ENCODE measurements at regions of chr5 and their contacts with region 1.

Region 1: GRCh38 chr5:95069948-95070347 is 214.9 kb downstream of the MCTP1 start:
- DNase-seq: no peak
- ATAC-seq: peak; percentile 42
- H3K4me3 ChIP-seq: no peak overlapping the region; the same call in 1 of the 2 replicates
- H3K27ac ChIP-seq: peak overlapping the region; percentile 30; the same call in 1 of the 2 replicates
- H3K4me1 ChIP-seq: peaks cover 44% of the 10 kb centered on the region
- H3K27me3 ChIP-seq: no peaks in the 10 kb centered on the region
- CTCF ChIP-seq: no peak
- EP300 ChIP-seq: no peak
- POLR2A ChIP-seq: no peak
- RAD21 ChIP-seq: no peak

Region 2: GRCh38 chr5:94021246-94021645 is 1048.7 kb before region 1 on chr5:
- CTCF ChIA-PET with region 1: no interaction called
- POLR2A ChIA-PET with region 1: no interaction called
- RAD21 ChIA-PET with region 1: no interaction called
- SMC1A ChIA-PET with region 1: no interaction called
- in situ Hi-C with region 1: no loop called
- intact Hi-C with region 1: no loop called
- DNase-seq: no peak
- ATAC-seq: no peak
- H3K4me3 ChIP-seq: no peak overlapping the region
- H3K27ac ChIP-seq: no peak overlapping the region
- H3K4me1 ChIP-seq: no peaks in the 10 kb centered on the region
- H3K27me3 ChIP-seq: no peaks in the 10 kb centered on the region
- CTCF ChIP-seq: no peak
- EP300 ChIP-seq: no peak
- POLR2A ChIP-seq: no peak
- RAD21 ChIP-seq: no peak

Region 3: DNA sequence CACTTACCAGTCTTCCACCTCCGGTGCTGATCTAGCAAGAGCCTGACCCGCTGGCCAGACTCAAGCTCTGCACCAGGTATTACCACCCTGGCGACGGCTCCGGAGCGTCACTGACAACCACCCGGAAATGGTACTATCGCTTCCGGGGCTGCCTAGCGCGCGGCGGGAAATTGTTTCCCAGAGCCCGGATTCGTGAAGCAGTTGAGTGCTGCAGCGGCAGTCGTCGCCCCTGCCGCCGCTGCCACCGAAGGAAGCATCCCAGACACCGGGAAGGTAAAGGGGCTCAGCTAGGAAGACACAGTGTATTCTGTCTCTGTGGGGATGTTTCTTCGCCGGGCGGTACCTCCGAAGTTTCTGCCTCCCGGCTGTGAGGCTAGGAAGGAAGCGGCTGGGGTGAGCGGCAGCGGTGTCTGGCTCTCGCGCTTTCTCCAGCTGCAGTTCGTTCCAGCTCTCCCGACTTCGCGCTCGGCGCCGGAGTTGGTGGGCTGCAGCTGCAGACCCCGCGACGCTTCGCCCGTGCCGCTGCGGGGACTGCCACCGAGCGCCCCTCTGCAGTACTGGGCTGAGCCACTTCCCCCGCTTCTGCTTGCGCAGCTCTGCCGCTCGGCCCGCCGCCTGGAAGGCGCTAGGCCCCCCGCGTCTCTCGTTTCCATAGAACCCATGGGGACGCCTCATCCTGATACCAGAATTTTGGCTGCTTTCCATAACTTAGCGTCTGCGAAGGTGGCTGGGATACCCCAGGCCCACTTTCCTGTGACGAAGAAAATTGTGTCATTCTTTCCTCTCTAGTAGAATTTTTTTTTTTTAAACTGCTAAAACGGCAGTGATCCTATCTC is 451.2 kb before region 1 on chr5 and contains the starts of genes KIAA0825 and SLF1:
- CTCF ChIA-PET with region 1: interaction called, 3 read pairs
- POLR2A ChIA-PET with region 1: no interaction called
- RAD21 ChIA-PET with region 1: no interaction called
- SMC1A ChIA-PET with region 1: no interaction called
- in situ Hi-C with region 1: loop called (anchors 10 kb)
- intact Hi-C with region 1: no loop called
- DNase-seq: peak; percentile 39
- ATAC-seq: peak; percentile 94
- H3K4me3 ChIP-seq: peak within 1 kb of the TSS; percentile 79
- H3K27ac ChIP-seq: peak within 1 kb of the TSS; percentile 45
- H3K4me1 ChIP-seq: peaks cover 3% of the 10 kb centered on the region
- H3K27me3 ChIP-seq: no peaks in the 10 kb centered on the region
- CTCF ChIP-seq: no peak
- EP300 ChIP-seq: no peak
- POLR2A ChIP-seq: peak; percentile 80
- RAD21 ChIP-seq: no peak
- polyA plus RNA-seq, gene KIAA0825: 0.90 to 1.9 TPM
- polyA plus RNA-seq, gene SLF1: 14.1 to 27.0 TPM

Region 4: DNA sequence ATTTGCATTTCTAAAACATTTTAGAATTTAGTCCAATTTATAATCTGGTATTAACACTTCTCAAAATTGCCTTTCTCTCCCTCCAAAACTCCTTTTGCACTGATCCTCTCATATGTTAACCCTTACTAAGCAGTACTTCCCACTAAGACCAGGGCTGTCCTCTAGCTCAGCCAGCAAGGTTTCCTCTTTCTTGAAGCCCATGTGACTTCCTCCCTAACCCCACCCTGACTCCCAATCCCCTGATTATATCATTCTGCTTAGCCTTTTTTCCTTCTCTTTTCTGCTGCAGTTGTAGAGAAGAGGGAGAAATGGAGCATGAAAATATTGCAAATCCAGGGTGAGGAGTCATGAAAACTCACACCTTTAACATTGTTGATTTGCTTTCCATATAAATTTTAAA is 26.7 kb before region 1 on chr5:
- CTCF ChIA-PET with region 1: interaction called, 5 read pairs
- POLR2A ChIA-PET with region 1: interaction called, 10 read pairs
- RAD21 ChIA-PET with region 1: interaction called, 9 read pairs
- SMC1A ChIA-PET with region 1: interaction called, 8 read pairs
- in situ Hi-C with region 1: no loop called
- intact Hi-C with region 1: no loop called
- DNase-seq: no peak
- ATAC-seq: peak; percentile 44; the same call in 2 of the 3 replicates
- H3K4me3 ChIP-seq: no peak overlapping the region
- H3K27ac ChIP-seq: no peak overlapping the region
- H3K4me1 ChIP-seq: no peaks in the 10 kb centered on the region; the same call in 1 of the 2 replicates
- H3K27me3 ChIP-seq: no peaks in the 10 kb centered on the region
- CTCF ChIP-seq: no peak
- EP300 ChIP-seq: no peak
- POLR2A ChIP-seq: no peak
- RAD21 ChIP-seq: no peak

Region 5: DNA sequence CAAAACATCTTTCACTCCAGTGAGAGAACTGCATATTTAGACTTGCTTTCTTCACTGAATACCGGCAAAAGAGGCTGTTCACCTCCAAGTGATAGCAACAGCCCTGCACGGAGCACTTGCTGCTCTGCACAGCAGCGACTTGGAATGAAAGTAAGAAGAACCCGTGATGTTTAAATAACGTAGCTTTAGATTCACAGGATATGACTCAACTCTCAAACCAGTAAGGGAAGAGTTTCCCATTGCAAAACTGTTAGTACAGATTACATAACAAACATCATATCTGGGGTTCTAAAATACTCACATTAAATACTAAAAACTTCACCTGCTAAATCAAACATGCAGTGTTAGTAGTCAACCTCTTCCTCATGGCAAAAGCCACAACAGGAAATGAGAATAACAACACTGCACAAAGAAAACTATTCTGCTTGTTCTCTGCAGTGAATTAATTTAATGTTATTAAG is 11.6 kb after region 1 on chr5:
- CTCF ChIA-PET with region 1: interaction called, 25 read pairs
- POLR2A ChIA-PET with region 1: interaction called, 24 read pairs
- RAD21 ChIA-PET with region 1: interaction called, 86 read pairs
- SMC1A ChIA-PET with region 1: interaction called, 29 read pairs
- in situ Hi-C with region 1: no loop called
- intact Hi-C with region 1: no loop called
- DNase-seq: peak; percentile 89
- ATAC-seq: peak; percentile 85
- H3K4me3 ChIP-seq: peak overlapping the region; percentile 37
- H3K27ac ChIP-seq: peak overlapping the region; percentile 66
- H3K4me1 ChIP-seq: no peaks in the 10 kb centered on the region
- H3K27me3 ChIP-seq: no peaks in the 10 kb centered on the region
- CTCF ChIP-seq: no peak
- EP300 ChIP-seq: peak; percentile 26 to 55; a peak in 2 of 4 replicates
- POLR2A ChIP-seq: peak; percentile 85
- RAD21 ChIP-seq: no peak

Region 6: GRCh38 chr5:95620870-95621837 is 551.2 kb after region 1 on chr5:
- CTCF ChIA-PET with region 1: no interaction called
- POLR2A ChIA-PET with region 1: no interaction called
- RAD21 ChIA-PET with region 1: no interaction called
- SMC1A ChIA-PET with region 1: no interaction called
- in situ Hi-C with region 1: no loop called
- intact Hi-C with region 1: loop called (anchors 10 kb)
- DNase-seq: no peak
- ATAC-seq: peak; percentile 61
- H3K4me3 ChIP-seq: peak overlapping the region; percentile 62; the same call in 1 of the 2 replicates
- H3K27ac ChIP-seq: peak overlapping the region; percentile 21; the same call in 1 of the 2 replicates
- H3K4me1 ChIP-seq: peaks cover 19% of the 10 kb centered on the region
- H3K27me3 ChIP-seq: peaks cover 0 to 2% of the 10 kb centered on the region in 2 experiments; a peak in 1 of 4 replicates
- CTCF ChIP-seq: 0 out of 6 replicates have a peak, but pooled peaks of 1 of the 3 experiments have one; percentile 6
- EP300 ChIP-seq: no peak
- POLR2A ChIP-seq: no peak; the same call in 1 of the 2 replicates
- RAD21 ChIP-seq: no peak